ENCODE measurements at regions of chr4 and their contacts with region 1.

Region 1: DNA sequence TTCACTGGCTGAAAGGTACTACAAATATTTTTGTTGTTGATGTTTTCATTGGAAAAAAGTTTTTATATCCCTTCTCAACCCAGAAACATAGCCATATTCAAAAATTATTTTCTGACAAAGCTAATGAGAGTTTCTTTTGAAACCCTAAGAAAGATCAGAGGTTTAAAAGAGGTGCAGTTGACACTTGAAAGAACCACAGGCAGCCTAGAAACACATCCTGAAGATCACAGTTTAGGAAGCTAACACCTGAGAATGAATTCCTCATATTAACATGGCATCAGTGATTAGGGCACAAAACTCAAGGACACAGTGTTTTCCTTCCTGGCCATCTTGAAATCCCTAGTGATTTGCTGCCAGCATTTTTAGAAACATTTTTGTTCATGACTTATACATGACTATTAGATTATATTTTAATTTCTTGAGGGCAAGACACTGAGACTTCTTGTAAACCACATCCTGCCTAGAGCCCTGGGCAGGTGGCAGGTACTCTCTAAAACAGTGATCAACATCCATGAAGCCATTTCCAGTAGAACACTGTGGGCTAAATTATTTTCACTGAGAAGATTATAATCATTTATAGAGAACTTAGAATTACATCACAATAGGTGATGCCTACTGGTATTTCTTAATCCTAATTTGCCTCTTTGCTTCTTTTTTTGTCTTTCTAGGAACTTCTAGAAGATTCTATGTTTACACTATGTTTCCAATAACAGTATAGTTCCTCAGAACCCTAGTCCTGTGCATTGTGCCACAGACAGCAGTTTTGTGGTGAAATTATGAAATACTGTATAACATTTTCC is 80.0 kb downstream of the ARSJ start:
- H3K4me3 Mint-ChIP-seq: no peak overlapping the region
- H3K27ac Mint-ChIP-seq: peak overlapping the region; percentile 69
- H3K4me1 Mint-ChIP-seq: no peaks in the 10 kb centered on the region
- H3K27me3 Mint-ChIP-seq: peaks cover 6% of the 10 kb centered on the region

Region 2: DNA sequence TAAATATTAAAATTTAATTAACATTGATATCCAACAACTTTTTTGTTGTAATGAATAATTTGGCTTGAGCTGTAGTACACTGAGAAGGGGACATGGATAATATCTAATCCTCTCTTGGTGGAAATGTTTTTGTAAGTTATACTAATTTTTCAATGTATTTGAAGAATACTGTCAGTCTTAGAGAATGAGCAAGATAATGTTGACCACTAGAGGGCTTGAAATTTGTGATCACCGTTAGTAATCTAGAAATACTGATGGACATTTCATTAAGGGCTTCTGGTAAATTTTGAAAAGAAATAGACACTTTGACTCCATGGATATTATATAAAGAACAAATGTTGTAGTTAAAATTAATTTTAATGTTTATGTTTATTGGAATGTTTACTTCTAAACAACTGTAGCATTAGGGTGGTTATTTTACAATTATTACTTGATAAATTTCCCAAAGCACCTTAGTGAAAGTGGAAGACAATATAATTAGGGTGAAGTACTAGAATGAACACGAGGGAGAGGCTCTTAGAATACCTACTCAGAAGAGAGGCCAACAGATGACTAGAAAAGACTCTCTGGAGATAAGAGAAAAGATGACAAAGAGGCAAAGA is 117.9 kb before region 1 on chr4:
- intact Hi-C with region 1: loop called (anchors 5 kb)
- H3K4me3 Mint-ChIP-seq: no peak overlapping the region
- H3K27ac Mint-ChIP-seq: no peak overlapping the region
- H3K4me1 Mint-ChIP-seq: peaks cover 21% of the 10 kb centered on the region
- H3K27me3 Mint-ChIP-seq: peaks cover 2% of the 10 kb centered on the region

Measured in dendritic cell treated with granulocyte-macrophage colony-stimulating factor and Interleukin-4, amounts not matched to agents 40 ng/mL and 50 ng/mL, for 4 days (primary cell).